A673 (cell line): ENCODE measurements at regions of chr13 and their contacts with region 1.

Region 1: DNA sequence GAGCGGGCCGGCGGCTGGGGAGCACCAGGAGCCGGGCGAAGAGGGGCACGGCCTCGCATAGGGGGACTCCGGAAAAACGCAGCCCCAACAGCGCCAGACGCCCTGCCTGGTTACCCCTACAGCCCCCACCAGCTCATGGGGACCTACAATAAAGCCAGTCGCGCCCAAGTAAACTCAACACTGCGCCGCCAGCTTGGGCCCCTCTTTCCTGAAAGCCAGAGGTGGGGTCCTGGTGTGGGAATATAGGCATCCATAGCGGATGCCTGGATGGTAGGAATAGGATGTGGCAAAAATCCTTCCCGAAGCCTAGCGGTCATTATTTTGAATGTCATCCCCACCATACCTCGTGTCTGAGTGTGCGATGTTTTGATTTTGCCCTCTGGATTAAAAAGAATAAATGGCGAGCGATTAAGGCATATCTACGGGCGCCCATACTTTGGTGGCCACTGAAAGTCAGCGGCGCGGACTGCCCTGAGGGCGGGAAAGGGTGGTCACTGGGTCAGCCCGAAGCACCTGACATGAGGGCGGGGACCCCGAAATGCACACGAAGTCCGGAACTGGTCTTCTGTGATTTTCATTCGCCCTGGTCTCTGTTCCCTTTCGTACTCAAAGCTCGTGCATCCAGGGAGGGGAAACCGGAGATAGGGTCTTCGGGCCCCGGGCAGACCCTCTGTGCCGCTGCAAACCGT is at the starts of genes NHLRC3 and PROSER1:
- DNase-seq: peak; percentile 90
- H3K4me3 ChIP-seq: peak within 1 kb of the TSS; percentile 89
- H3K27ac ChIP-seq: peak within 1 kb of the TSS; percentile 82
- H3K4me1 ChIP-seq: peaks cover 21% of the 10 kb centered on the region
- H3K27me3 ChIP-seq: no peaks in the 10 kb centered on the region
- CTCF ChIP-seq: no peak
- total RNA-seq, gene NHLRC3: 12.3 and 17.4 TPM in 2 replicates
- total RNA-seq, gene PROSER1: 58.5 and 58.7 TPM in 2 replicates

Region 2: GRCh38 chr13:38496917-38497316 is 541.1 kb before region 1 on chr13:
- CTCF ChIA-PET with region 1: no interaction called
- POLR2A ChIA-PET with region 1: no interaction called
- intact Hi-C with region 1: no loop called
- DNase-seq: no peak
- H3K4me3 ChIP-seq: no peak overlapping the region
- H3K27ac ChIP-seq: no peak overlapping the region
- H3K4me1 ChIP-seq: no peaks in the 10 kb centered on the region
- H3K27me3 ChIP-seq: no peaks in the 10 kb centered on the region
- CTCF ChIP-seq: no peak

Region 3: DNA sequence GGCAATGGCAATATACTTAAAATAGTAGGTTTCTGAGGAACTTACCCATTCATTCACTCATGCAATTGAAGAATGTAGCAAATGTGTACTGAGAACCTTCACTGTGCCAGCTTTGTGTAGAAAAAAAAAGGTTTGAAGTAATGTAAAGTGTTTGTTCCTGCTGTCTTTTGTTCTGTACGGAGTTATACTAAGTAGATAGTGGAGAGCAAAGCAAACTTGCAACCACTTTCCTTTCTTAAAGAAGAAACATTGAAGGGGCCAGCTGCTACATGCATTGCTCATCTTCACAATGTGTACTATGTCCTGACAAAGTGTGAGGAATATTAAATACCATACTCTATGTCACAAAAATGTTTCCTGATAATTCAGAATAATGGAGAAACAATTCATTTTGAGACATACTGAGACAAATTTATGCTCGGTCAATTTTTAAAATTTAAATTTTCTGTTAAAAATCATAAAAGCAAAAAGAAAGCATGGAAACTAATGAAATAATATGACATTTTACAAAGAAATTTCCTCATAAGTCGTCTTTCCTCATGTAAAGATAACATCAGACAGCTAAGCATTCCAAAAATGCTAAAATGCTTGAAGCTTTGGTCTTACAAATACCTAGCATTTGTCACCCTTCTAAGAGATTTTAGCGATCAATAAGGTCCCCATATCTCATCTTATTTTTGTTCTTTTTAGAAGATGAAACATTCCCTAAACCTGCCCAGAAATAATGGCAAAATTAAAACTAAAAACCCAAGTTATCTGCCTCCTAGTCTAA is 419.9 kb before region 1 on chr13:
- CTCF ChIA-PET with region 1: no interaction called
- POLR2A ChIA-PET with region 1: no interaction called
- intact Hi-C with region 1: no loop called
- DNase-seq: no peak
- H3K4me3 ChIP-seq: no peak overlapping the region
- H3K27ac ChIP-seq: no peak overlapping the region
- H3K4me1 ChIP-seq: no peaks in the 10 kb centered on the region
- H3K27me3 ChIP-seq: no peaks in the 10 kb centered on the region
- CTCF ChIP-seq: no peak

Region 4: DNA sequence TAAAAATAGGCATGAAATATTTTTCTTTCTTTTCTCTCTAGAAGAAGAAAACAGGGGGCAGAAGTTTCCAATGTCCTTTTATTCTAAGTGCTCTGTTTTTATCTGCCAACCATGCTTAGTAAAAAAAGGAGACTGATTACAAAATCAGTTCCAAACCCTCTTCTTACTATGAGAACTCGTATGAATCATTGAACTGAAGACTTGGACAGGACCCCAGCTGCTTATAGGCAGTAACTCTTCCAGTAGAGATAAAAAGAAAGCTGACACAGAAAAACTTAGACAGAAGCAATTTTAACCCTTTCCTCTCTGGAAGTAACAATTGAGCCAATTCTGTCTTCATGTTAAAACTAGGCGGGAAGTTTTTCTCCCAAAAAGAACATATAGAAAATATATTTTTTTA is 375.7 kb before region 1 on chr13:
- CTCF ChIA-PET with region 1: no interaction called
- POLR2A ChIA-PET with region 1: no interaction called
- intact Hi-C with region 1: loop called (anchors 10 kb)
- DNase-seq: peak; percentile 96
- H3K4me3 ChIP-seq: no peak overlapping the region
- H3K27ac ChIP-seq: peak overlapping the region; percentile 49
- H3K4me1 ChIP-seq: peaks cover 77% of the 10 kb centered on the region
- H3K27me3 ChIP-seq: no peaks in the 10 kb centered on the region
- CTCF ChIP-seq: no peak

Region 5: GRCh38 chr13:39676315-39676876 is 638.4 kb after region 1 on chr13:
- CTCF ChIA-PET with region 1: no interaction called
- POLR2A ChIA-PET with region 1: no interaction called
- intact Hi-C with region 1: loop called (anchors 5 kb)
- DNase-seq: peak; percentile 84
- H3K4me3 ChIP-seq: no peak overlapping the region
- H3K27ac ChIP-seq: no peak overlapping the region
- H3K4me1 ChIP-seq: peaks cover 12% of the 10 kb centered on the region
- H3K27me3 ChIP-seq: no peaks in the 10 kb centered on the region
- CTCF ChIP-seq: peak; percentile 66